ENCODE measurements at regions of chr12 and their contacts with region 1.

Region 1: DNA sequence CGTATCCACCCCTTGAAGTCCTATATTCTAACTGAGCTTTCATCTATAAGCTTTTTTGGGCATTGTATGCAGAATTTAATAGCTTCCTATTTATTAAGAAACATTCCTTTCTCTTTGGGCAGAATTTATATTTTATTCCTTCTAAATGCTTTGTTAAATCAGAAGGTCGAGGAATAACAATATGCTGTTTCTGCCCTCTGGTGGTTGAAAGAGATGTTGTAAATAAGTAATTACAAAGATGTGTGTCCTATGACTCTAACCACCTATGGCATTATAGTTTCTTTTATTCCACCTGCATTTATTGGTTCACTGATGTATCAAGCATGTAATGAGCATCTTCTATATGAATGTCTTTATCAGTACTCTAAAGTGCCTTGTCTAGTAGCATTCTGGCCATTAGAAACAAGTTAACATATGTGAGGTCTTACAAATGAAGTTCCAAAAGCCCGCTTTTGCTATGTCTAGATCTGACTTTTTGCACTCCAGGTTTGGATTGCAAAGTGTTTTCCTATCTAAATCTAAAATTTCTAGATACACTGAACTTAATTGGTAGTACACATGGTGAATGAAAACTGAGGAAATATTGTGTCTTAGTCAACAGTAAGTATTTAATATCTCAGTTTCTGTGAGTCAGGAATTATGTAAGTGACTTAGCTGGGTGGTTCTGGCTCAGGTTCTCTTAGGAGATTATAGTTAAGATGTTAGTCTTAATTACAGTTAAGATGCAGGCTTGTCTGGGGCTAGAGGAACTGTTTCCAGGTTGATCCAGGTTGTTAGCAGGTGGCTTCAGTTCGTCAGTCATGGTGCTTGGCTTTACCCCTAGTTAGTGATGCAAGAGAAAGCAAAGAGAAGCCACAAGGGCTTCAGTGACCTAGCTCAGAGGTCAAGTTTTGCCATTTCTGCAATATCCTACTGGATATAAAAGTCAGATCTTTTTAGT is 57.5 kb downstream of the PLEKHA5 start:
- DNase-seq: peak; percentile 29
- H3K4me3 ChIP-seq: no peak overlapping the region
- H3K27ac ChIP-seq: no peak overlapping the region
- H3K4me1 ChIP-seq: no peaks in the 10 kb centered on the region
- H3K27me3 ChIP-seq: no peaks in the 10 kb centered on the region
- CTCF ChIP-seq: peak; percentile 30 to 77 (median 72)
- POLR2A ChIP-seq: no peak

Region 2: GRCh38 chr12:18250313-18250916 is 936.6 kb before region 1 on chr12:
- intact Hi-C with region 1: loop called (anchors 2 kb)
- DNase-seq: peak; percentile 40
- H3K4me3 ChIP-seq: no peak overlapping the region
- H3K27ac ChIP-seq: no peak overlapping the region
- H3K4me1 ChIP-seq: no peaks in the 10 kb centered on the region
- H3K27me3 ChIP-seq: no peaks in the 10 kb centered on the region
- CTCF ChIP-seq: peak; percentile 31 to 78 (median 62)
- POLR2A ChIP-seq: no peak

Region 3: GRCh38 chr12:18428416-18428815 is 758.6 kb before region 1 on chr12:
- intact Hi-C with region 1: loop called (anchors 10 kb)
- DNase-seq: no peak
- H3K4me3 ChIP-seq: no peak overlapping the region
- H3K27ac ChIP-seq: no peak overlapping the region
- H3K4me1 ChIP-seq: no peaks in the 10 kb centered on the region
- H3K27me3 ChIP-seq: no peaks in the 10 kb centered on the region
- CTCF ChIP-seq: no peak
- POLR2A ChIP-seq: no peak

Region 4: GRCh38 chr12:19553175-19553574 is 366.2 kb after region 1 on chr12:
- intact Hi-C with region 1: no loop called
- DNase-seq: no peak
- H3K4me3 ChIP-seq: no peak overlapping the region
- H3K27ac ChIP-seq: no peak overlapping the region
- H3K4me1 ChIP-seq: no peaks in the 10 kb centered on the region
- H3K27me3 ChIP-seq: no peaks in the 10 kb centered on the region
- CTCF ChIP-seq: no peak
- POLR2A ChIP-seq: no peak